ENCODE measurements at regions of chr9 and their contacts with region 1.

Region 1: GRCh38 chr9:93453047-93453914 is at the start of gene FAM120AOS:
- DNase-seq: peak; percentile 79 to 91 (median 80)
- H3K4me3 ChIP-seq: peak within 1 kb of the TSS; percentile 69 to 83
- H3K4me3 Mint-ChIP-seq: peak within 1 kb of the TSS; percentile 93 to 98 (median 96)
- H3K27ac ChIP-seq: peak within 1 kb of the TSS; percentile 69
- H3K27ac Mint-ChIP-seq: peak within 1 kb of the TSS; percentile 88 to 99 (median 97)
- H3K4me1 ChIP-seq: peaks cover 62% of the 10 kb centered on the region
- H3K4me1 Mint-ChIP-seq: peaks cover 36 to 63% (median 51%) of the 10 kb centered on the region in 4 donors
- H3K27me3 ChIP-seq: no peaks in the 10 kb centered on the region
- H3K27me3 Mint-ChIP-seq: no peaks in the 10 kb centered on the region
- total RNA-seq, gene FAM120AOS: 49.7 to 50.8 TPM

Region 2: GRCh38 chr9:92877531-92878430 is 575.5 kb before region 1 on chr9 and contains the start of gene ZNF484:
- CTCF ChIA-PET with region 1: no interaction called
- POLR2A ChIA-PET with region 1: no interaction called
- intact Hi-C with region 1: loop called (anchors 2 kb)
- DNase-seq: peak; percentile 94 to 97 (median 95)
- H3K4me3 ChIP-seq: peak within 1 kb of the TSS; percentile 81 to 97
- H3K4me3 Mint-ChIP-seq: peak within 1 kb of the TSS; percentile 87 to 100 (median 99)
- H3K27ac ChIP-seq: peak within 1 kb of the TSS; percentile 94
- H3K27ac Mint-ChIP-seq: peak within 1 kb of the TSS; percentile 96 to 100 (median 99)
- H3K4me1 ChIP-seq: peaks cover 35% of the 10 kb centered on the region
- H3K4me1 Mint-ChIP-seq: peaks cover 30 to 48% (median 40%) of the 10 kb centered on the region in 4 donors
- H3K27me3 ChIP-seq: no peaks in the 10 kb centered on the region
- H3K27me3 Mint-ChIP-seq: no peaks in the 10 kb centered on the region
- total RNA-seq, gene ZNF484: 22.6 to 24.7 TPM

Region 3: GRCh38 chr9:93464395-93464794 is 11.1 kb after region 1 on chr9:
- CTCF ChIA-PET with region 1: interaction called, 19 read pairs
- POLR2A ChIA-PET with region 1: interaction called, 34 read pairs
- intact Hi-C with region 1: loop called (anchors 2 kb)
- DNase-seq: peak in 1 of 5 donors; percentile 11
- H3K4me3 ChIP-seq: no peak overlapping the region
- H3K4me3 Mint-ChIP-seq: peak overlapping the region in 7 of 8 donors; percentile 5 to 72 (median 47)
- H3K27ac ChIP-seq: no peak overlapping the region
- H3K27ac Mint-ChIP-seq: peak overlapping the region; percentile 10 to 85 (median 73)
- H3K4me1 ChIP-seq: peaks cover 83% of the 10 kb centered on the region
- H3K4me1 Mint-ChIP-seq: peaks cover 71 to 95% (median 80%) of the 10 kb centered on the region in 4 donors
- H3K27me3 ChIP-seq: no peaks in the 10 kb centered on the region
- H3K27me3 Mint-ChIP-seq: no peaks in the 10 kb centered on the region

Region 4: GRCh38 chr9:94166237-94166963 is 713.1 kb after region 1 on chr9:
- CTCF ChIA-PET with region 1: no interaction called
- POLR2A ChIA-PET with region 1: interaction called, 3 read pairs
- intact Hi-C with region 1: loop called (anchors 10 kb)
- DNase-seq: peak; percentile 93 to 96 (median 94)
- H3K4me3 ChIP-seq: peak overlapping the region in 1 of 2 donors; percentile 80
- H3K4me3 Mint-ChIP-seq: peak overlapping the region; percentile 79 to 98 (median 90)
- H3K27ac ChIP-seq: peak overlapping the region; percentile 98
- H3K27ac Mint-ChIP-seq: peak overlapping the region; percentile 90 to 96 (median 95)
- H3K4me1 ChIP-seq: peaks cover 48% of the 10 kb centered on the region
- H3K4me1 Mint-ChIP-seq: peaks cover 34 to 64% (median 45%) of the 10 kb centered on the region in 4 donors
- H3K27me3 ChIP-seq: no peaks in the 10 kb centered on the region
- H3K27me3 Mint-ChIP-seq: no peaks in the 10 kb centered on the region